Activated CD8-positive, alpha-beta memory T cell treated with anti-CD3 and anti-CD28 coated beads, Interleukin-2, amount 10 ng/mL, durations not matched to agents 7 days and 5 days (primary cell): ENCODE measurements at regions of chr7 and their contacts with region 1.

Region 1: DNA sequence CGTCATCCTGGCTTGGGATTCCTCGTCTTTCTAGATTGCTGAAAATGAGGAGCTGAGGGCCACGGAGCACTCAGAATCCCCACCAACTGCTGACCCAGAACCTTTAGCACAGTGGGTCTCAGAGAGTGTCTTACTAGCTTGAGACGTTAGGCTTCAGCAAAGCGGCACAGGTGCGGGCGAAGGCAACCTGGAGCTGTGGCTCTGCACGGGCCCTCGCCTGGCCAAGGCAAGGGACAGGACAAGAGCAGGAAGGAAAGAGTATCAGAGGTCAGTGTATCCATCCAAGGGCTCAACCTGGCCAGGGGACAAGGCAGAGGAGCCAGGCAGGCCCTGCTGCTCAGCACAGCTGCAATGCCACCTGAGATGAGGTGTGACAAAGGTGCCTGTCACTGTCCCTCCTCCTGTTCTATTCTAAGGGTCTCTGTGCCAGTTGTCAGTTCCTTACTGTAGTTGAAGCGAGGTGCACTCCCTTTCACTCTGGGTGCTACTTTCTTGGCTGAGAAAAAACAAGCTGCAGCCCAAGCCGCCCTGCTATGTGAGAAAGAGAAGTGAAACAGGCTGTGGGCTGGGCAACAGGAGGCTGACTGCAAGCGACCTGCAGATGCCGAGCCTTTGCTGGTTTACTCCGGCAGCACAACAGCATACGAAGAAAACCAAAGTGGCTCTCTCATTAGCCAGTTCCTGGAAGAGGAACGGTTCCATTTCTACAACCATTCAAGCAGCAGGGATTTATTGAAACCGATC is 33.3 kb upstream of the KDM7A start:
- DNase-seq: peak; percentile 89
- ATAC-seq: peak; percentile 68
- H3K4me3 Mint-ChIP-seq: peak overlapping the region; percentile 47
- H3K27ac Mint-ChIP-seq: peak overlapping the region; percentile 87
- H3K4me1 Mint-ChIP-seq: peaks cover 71% of the 10 kb centered on the region
- H3K27me3 Mint-ChIP-seq: no peaks in the 10 kb centered on the region

Region 2: DNA sequence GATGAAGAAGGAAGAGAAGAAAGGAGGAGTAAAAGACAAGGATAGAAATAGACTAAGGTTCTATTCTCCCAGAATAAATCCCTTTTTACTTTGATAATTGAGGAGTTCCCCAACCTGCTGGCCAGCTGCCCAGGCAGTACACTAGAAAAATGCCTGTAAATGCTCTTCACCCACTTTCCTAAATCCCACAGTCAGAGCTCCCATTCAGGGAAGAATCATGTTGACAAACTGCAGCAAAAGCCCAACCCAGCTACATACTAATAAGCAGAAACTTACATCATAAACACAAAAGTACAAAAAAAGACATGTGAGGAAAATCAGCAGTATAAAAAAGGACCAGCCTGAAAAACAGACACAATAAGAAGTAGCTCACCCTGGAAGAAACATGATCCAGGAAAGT is 17.4 kb before region 1 on chr7:
- CTCF ChIA-PET with region 1: interaction called, 11 read pairs
- DNase-seq: no peak
- ATAC-seq: no peak
- H3K4me3 Mint-ChIP-seq: no peak overlapping the region
- H3K27ac Mint-ChIP-seq: no peak overlapping the region
- H3K4me1 Mint-ChIP-seq: peaks cover 18% of the 10 kb centered on the region
- H3K27me3 Mint-ChIP-seq: peaks cover 13% of the 10 kb centered on the region

Region 3: GRCh38 chr7:140230861-140231770 is 21.1 kb after region 1 on chr7:
- CTCF ChIA-PET with region 1: interaction called, 34 read pairs
- DNase-seq: peak; percentile 76
- ATAC-seq: peak; percentile 56
- H3K4me3 Mint-ChIP-seq: peak overlapping the region; percentile 82
- H3K27ac Mint-ChIP-seq: peak overlapping the region; percentile 86
- H3K4me1 Mint-ChIP-seq: peaks cover 31% of the 10 kb centered on the region
- H3K27me3 Mint-ChIP-seq: no peaks in the 10 kb centered on the region